ENCODE measurements at regions of chr4 and their contacts with region 1.

Region 1: DNA sequence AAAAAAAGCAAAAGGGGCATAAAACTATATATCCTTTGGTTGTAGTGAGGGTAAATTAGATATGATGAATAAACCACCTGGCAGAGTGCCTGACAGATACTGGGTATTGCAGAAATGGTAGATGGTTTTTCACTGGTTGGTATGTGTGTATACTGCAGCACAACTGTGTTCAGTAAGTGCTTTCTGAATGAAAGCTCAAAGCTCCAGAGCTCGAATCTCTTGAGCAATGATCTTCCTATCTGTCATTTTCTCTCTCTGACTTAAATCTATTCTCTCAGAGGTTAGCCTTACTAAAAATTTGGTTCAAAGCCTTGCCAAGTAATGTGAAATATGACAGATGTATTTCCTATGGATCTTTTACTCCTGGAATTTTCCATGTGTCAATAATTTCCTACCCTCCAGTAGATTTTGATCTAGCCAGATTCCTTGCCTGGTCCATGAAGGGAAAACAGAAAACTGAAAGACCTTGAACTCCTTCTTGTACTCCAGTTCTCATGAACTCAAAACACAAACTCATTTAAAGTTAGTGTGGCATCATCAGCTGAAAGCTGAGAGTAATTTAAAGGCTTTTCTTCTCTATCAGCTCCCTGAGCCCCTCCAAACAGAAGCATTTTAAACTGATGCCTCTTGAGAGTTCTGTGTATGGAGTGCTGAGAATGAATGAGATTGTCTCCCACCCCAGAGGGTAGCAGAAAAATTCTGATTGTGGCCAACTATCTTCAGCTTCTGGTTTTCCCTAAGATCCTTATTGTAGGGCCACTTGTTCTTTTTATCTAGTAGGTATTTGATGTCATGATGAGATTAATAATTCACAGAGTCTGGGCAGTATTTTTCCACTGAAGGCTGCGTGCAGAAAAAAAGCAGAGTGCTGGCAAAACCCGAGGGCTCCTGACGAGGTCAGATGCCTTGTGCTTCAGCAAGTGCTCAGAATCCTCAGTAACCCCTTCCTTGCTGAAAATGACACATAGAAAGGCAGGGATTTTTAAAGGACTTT is 363.4 kb upstream of the BOD1L1 start:
- DNase-seq: peak; percentile 61 to 72
- H3K4me3 ChIP-seq: no peak overlapping the region
- H3K4me3 Mint-ChIP-seq: peak overlapping the region; percentile 29
- H3K27ac Mint-ChIP-seq: no peak overlapping the region
- H3K4me1 ChIP-seq: peaks cover 15% of the 10 kb centered on the region
- H3K4me1 Mint-ChIP-seq: no peaks in the 10 kb centered on the region
- H3K27me3 ChIP-seq: no peaks in the 10 kb centered on the region
- H3K27me3 Mint-ChIP-seq: no peaks in the 10 kb centered on the region
- CTCF ChIP-seq: no peak

Region 2: GRCh38 chr4:13912966-13913365 is 77.9 kb before region 1 on chr4:
- CTCF ChIA-PET with region 1: no interaction called
- POLR2A ChIA-PET with region 1: no interaction called
- intact Hi-C with region 1: loop called (anchors 2 kb)
- DNase-seq: peak in 1 of 2 experiments; percentile 18
- H3K4me3 ChIP-seq: no peak overlapping the region
- H3K4me3 Mint-ChIP-seq: no peak overlapping the region
- H3K27ac Mint-ChIP-seq: peak overlapping the region; percentile 71
- H3K4me1 ChIP-seq: peaks cover 28% of the 10 kb centered on the region
- H3K4me1 Mint-ChIP-seq: peaks cover 14% of the 10 kb centered on the region
- H3K27me3 ChIP-seq: no peaks in the 10 kb centered on the region
- H3K27me3 Mint-ChIP-seq: no peaks in the 10 kb centered on the region
- CTCF ChIP-seq: no peak

Region 3: DNA sequence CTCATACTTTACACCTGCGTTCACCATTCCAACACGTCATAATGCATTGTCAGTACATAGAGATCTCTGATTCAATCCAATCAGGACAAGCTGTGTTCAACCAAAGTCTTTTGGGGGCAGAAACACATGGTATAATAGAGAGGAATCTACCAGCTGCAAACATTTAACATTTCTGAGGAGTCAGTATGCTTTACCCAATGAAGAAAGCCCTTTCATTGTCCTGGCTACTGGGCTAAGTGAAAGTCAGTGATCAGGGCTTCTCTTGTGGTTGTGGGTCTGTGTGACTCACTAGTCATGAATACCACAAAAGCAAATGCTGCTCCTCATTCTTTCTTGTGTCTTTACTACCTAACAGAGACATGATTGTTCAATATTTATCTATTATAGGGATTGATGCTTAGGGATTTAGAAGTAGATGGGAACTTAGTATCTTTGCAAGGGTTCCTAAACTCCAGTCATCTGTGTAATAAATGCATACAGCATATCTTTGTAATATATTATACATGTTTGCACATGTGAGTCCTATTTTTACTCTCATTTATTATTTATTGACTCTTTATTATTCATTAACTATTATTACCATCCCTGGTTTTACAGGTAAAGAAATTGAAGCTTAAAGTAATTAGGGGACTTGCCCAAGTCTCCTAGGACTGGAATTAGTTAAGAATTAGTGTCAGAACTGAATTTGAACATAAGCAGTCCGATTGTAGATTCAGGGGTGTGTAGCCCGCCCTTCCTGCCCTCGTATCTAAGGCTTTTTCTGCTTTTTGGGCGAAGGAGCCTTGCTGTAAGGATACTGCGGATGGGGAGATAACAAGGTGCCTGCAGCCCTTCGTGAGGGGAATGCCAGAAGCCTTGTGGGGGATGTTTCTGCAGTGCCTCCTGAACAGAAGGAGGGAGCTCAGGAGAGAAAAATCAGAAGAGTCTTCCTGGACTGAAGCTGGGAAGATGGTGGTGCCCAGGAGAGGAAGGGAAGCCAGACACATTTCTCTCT is 10.3 kb before region 1 on chr4:
- CTCF ChIA-PET with region 1: no interaction called
- POLR2A ChIA-PET with region 1: no interaction called
- intact Hi-C with region 1: loop called (anchors 1 kb)
- DNase-seq: peak; percentile 7 to 42
- H3K4me3 ChIP-seq: no peak overlapping the region
- H3K4me3 Mint-ChIP-seq: no peak overlapping the region
- H3K27ac Mint-ChIP-seq: no peak overlapping the region
- H3K4me1 ChIP-seq: peaks cover 4% of the 10 kb centered on the region; the same call in 1 of the 2 replicates
- H3K4me1 Mint-ChIP-seq: peaks cover 7% of the 10 kb centered on the region
- H3K27me3 ChIP-seq: no peaks in the 10 kb centered on the region
- H3K27me3 Mint-ChIP-seq: no peaks in the 10 kb centered on the region
- CTCF ChIP-seq: no peak

Region 4: GRCh38 chr4:14196131-14196530 is 205.2 kb after region 1 on chr4:
- CTCF ChIA-PET with region 1: no interaction called
- POLR2A ChIA-PET with region 1: no interaction called
- intact Hi-C with region 1: loop called (anchors 1 kb)
- DNase-seq: peak; percentile 53 to 70
- H3K4me3 ChIP-seq: no peak overlapping the region
- H3K4me3 Mint-ChIP-seq: no peak overlapping the region
- H3K27ac Mint-ChIP-seq: no peak overlapping the region
- H3K4me1 ChIP-seq: no peaks in the 10 kb centered on the region
- H3K4me1 Mint-ChIP-seq: no peaks in the 10 kb centered on the region
- H3K27me3 ChIP-seq: no peaks in the 10 kb centered on the region
- H3K27me3 Mint-ChIP-seq: no peaks in the 10 kb centered on the region
- CTCF ChIP-seq: no peak